CD8-positive, alpha-beta T cell (primary cell): ENCODE measurements at regions of chr15 and their contacts with region 1.

Region 1: GRCh38 chr15:65028921-65029735 is at the start of gene MTFMT:
- DNase-seq: peak; percentile 88 to 96 (median 93)
- ATAC-seq: peak; percentile 96
- H3K4me3 ChIP-seq: peak within 1 kb of the TSS; percentile 69 to 82
- H3K4me3 Mint-ChIP-seq: peak within 1 kb of the TSS; percentile 86
- H3K27ac ChIP-seq: peak within 1 kb of the TSS; percentile 53 to 61
- H3K27ac Mint-ChIP-seq: peak within 1 kb of the TSS; percentile 68
- H3K4me1 ChIP-seq: peaks cover 14% of the 10 kb centered on the region
- H3K4me1 Mint-ChIP-seq: peaks cover 24% of the 10 kb centered on the region
- H3K27me3 ChIP-seq: no peaks in the 10 kb centered on the region
- H3K27me3 Mint-ChIP-seq: peaks cover 14% of the 10 kb centered on the region
- CTCF ChIP-seq: no peak
- total RNA-seq, gene MTFMT: 6.9 to 7.4 TPM

Region 2: GRCh38 chr15:64989416-64990167 is 39.5 kb before region 1 on chr15 and contains the start of gene SPG21:
- CTCF ChIA-PET with region 1: no interaction called
- POLR2A ChIA-PET with region 1: no interaction called
- intact Hi-C with region 1: loop called (anchors 1 to 2 kb)
- DNase-seq: peak; percentile 77 to 96 (median 91)
- ATAC-seq: peak; percentile 88
- H3K4me3 ChIP-seq: peak within 1 kb of the TSS; percentile 73 to 88
- H3K4me3 Mint-ChIP-seq: peak within 1 kb of the TSS; percentile 96
- H3K27ac ChIP-seq: peak within 1 kb of the TSS; percentile 68 to 84
- H3K27ac Mint-ChIP-seq: peak within 1 kb of the TSS; percentile 94
- H3K4me1 ChIP-seq: peaks cover 12% of the 10 kb centered on the region
- H3K4me1 Mint-ChIP-seq: peaks cover 45% of the 10 kb centered on the region
- H3K27me3 ChIP-seq: no peaks in the 10 kb centered on the region
- H3K27me3 Mint-ChIP-seq: no peaks in the 10 kb centered on the region
- CTCF ChIP-seq: no peak
- total RNA-seq, gene SPG21: 25.1 to 28.2 TPM

Region 3: DNA sequence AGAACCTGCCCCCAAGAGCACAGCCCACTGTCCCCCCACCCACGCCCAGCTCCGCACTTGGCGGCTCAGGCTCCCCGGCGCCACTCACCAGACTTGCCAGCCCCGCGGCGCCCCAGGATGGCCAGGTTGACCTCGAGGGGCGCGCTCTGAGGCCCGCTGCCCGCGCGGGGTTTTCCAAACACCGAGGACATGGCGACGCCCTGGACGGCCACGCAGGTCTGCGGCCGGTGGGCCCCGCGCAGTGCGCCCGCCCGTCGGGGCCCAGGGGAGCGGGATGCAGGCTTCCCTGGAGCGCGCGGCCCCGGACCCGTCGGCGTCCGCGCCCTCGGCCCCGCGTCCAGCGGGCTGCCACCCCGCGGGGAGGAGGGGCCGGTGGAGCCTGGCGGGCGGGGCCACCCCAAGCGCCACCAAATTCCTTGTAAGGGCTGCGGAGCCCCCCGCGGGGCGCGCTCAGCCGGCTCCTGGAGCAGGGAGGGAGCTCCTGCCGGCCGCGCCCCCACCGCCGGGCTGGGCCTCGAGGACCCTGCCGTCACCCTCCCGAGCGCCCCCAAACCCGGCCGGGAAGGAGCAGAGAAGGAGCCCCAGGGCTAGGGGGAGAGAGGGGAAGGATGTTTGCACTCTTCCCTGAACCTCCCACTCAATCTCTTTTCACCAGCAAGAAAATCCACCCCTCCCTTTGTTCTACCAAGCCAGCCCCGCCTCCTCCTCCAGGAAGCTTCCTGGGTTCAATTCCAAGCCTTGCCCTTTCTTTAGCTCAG is 38.7 kb after region 1 on chr15 and contains the start of gene RASL12:
- CTCF ChIA-PET with region 1: no interaction called
- POLR2A ChIA-PET with region 1: no interaction called
- intact Hi-C with region 1: no loop called
- DNase-seq: no peak
- ATAC-seq: no peak
- H3K4me3 ChIP-seq: no peak within 1 kb of the TSS
- H3K4me3 Mint-ChIP-seq: peak within 1 kb of the TSS; percentile 58
- H3K27ac ChIP-seq: no peak within 1 kb of the TSS
- H3K27ac Mint-ChIP-seq: no peak within 1 kb of the TSS
- H3K4me1 ChIP-seq: no peaks in the 10 kb centered on the region
- H3K4me1 Mint-ChIP-seq: peaks cover 7% of the 10 kb centered on the region
- H3K27me3 ChIP-seq: peaks cover 3 to 5% of the 10 kb centered on the region in 2 experiments
- H3K27me3 Mint-ChIP-seq: peaks cover 29% of the 10 kb centered on the region
- CTCF ChIP-seq: no peak
- total RNA-seq, gene RASL12: not detected

Region 4: GRCh38 chr15:65077981-65078352 is 48.8 kb after region 1 on chr15:
- CTCF ChIA-PET with region 1: interaction called, 11 read pairs
- POLR2A ChIA-PET with region 1: no interaction called
- intact Hi-C with region 1: loop called (anchors 1 kb)
- DNase-seq: peak in 8 of 9 experiments; percentile 24 to 63 (median 48)
- ATAC-seq: peak; percentile 71
- H3K4me3 ChIP-seq: no peak overlapping the region
- H3K4me3 Mint-ChIP-seq: no peak overlapping the region
- H3K27ac ChIP-seq: no peak overlapping the region
- H3K27ac Mint-ChIP-seq: no peak overlapping the region
- H3K4me1 ChIP-seq: peaks cover 14% of the 10 kb centered on the region
- H3K4me1 Mint-ChIP-seq: peaks cover 18% of the 10 kb centered on the region
- H3K27me3 ChIP-seq: peaks cover 3% of the 10 kb centered on the region in 2 experiments
- H3K27me3 Mint-ChIP-seq: peaks cover 39% of the 10 kb centered on the region
- CTCF ChIP-seq: peak; percentile 22

Region 5: DNA sequence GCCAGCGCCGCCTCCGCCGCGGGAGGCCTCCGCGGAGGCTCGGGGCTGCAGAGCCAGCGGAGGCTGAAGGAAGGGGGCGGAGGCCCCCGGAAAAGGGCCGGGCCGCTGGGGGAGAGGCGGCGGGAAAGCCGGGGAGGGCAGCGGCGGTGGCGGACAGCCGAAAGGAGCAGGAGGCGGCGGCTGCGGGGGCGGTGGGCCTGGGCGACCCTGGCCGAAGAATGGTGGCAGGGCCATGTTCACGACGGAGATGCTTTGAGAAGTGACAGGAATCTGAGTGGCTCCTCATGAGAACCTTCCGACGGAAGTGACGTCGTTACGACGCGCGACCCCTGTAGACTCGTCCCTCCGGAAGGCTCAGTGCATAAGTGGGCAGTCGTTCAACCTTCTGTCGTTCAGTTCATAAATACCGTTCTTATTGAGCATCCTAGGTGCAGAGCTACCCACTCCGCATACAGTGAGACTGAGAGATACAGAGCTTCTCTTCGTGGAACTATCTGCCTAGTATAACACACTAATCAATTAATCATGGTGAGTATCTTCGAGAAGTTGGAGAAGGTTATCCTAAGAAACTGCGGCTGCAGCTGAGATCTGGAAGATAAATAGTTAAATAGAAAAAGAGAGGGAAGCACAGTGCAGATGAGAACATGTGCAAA is 104.5 kb after region 1 on chr15 and contains the start of gene PDCD7:
- CTCF ChIA-PET with region 1: no interaction called
- POLR2A ChIA-PET with region 1: no interaction called
- intact Hi-C with region 1: loop called (anchors 5 kb)
- DNase-seq: peak; percentile 60 to 95 (median 86)
- ATAC-seq: peak; percentile 93
- H3K4me3 ChIP-seq: peak within 1 kb of the TSS; percentile 62 to 78
- H3K4me3 Mint-ChIP-seq: peak within 1 kb of the TSS; percentile 91
- H3K27ac ChIP-seq: peak within 1 kb of the TSS; percentile 80 to 83
- H3K27ac Mint-ChIP-seq: peak within 1 kb of the TSS; percentile 96
- H3K4me1 ChIP-seq: peaks cover 26% of the 10 kb centered on the region
- H3K4me1 Mint-ChIP-seq: peaks cover 31% of the 10 kb centered on the region
- H3K27me3 ChIP-seq: no peaks in the 10 kb centered on the region
- H3K27me3 Mint-ChIP-seq: no peaks in the 10 kb centered on the region
- CTCF ChIP-seq: no peak
- total RNA-seq, gene PDCD7: 20.7 to 21.7 TPM

Region 6: GRCh38 chr15:65384895-65385858 is 356.0 kb after region 1 on chr15:
- CTCF ChIA-PET with region 1: no interaction called
- POLR2A ChIA-PET with region 1: no interaction called
- intact Hi-C with region 1: loop called (anchors 1 kb)
- DNase-seq: peak; percentile 68 to 88 (median 83)
- ATAC-seq: peak; percentile 88
- H3K4me3 ChIP-seq: peak overlapping the region; percentile 72 to 89
- H3K4me3 Mint-ChIP-seq: peak overlapping the region; percentile 90
- H3K27ac ChIP-seq: peak overlapping the region; percentile 1 to 60
- H3K27ac Mint-ChIP-seq: peak overlapping the region; percentile 18
- H3K4me1 ChIP-seq: peaks cover 7% of the 10 kb centered on the region
- H3K4me1 Mint-ChIP-seq: peaks cover 12% of the 10 kb centered on the region
- H3K27me3 ChIP-seq: no peaks in the 10 kb centered on the region
- H3K27me3 Mint-ChIP-seq: peaks cover 13% of the 10 kb centered on the region
- CTCF ChIP-seq: peak; percentile 78

Region 7: GRCh38 chr15:65451989-65452388 is 422.9 kb after region 1 on chr15:
- CTCF ChIA-PET with region 1: no interaction called
- POLR2A ChIA-PET with region 1: no interaction called
- intact Hi-C with region 1: no loop called
- DNase-seq: no peak
- ATAC-seq: no peak
- H3K4me3 ChIP-seq: no peak overlapping the region
- H3K4me3 Mint-ChIP-seq: no peak overlapping the region
- H3K27ac ChIP-seq: no peak overlapping the region
- H3K27ac Mint-ChIP-seq: no peak overlapping the region
- H3K4me1 ChIP-seq: no peaks in the 10 kb centered on the region
- H3K4me1 Mint-ChIP-seq: no peaks in the 10 kb centered on the region
- H3K27me3 ChIP-seq: no peaks in the 10 kb centered on the region
- H3K27me3 Mint-ChIP-seq: no peaks in the 10 kb centered on the region
- CTCF ChIP-seq: no peak

Region 8: GRCh38 chr15:66356345-66357236 is 1327.5 kb after region 1 on chr15 and contains the start of gene TIPIN:
- CTCF ChIA-PET with region 1: no interaction called
- POLR2A ChIA-PET with region 1: no interaction called
- intact Hi-C with region 1: no loop called
- DNase-seq: peak; percentile 92 to 98 (median 97)
- ATAC-seq: peak; percentile 97
- H3K4me3 ChIP-seq: peak within 1 kb of the TSS; percentile 69 to 76
- H3K4me3 Mint-ChIP-seq: peak within 1 kb of the TSS; percentile 99
- H3K27ac ChIP-seq: peak within 1 kb of the TSS; percentile 50 to 69
- H3K27ac Mint-ChIP-seq: peak within 1 kb of the TSS; percentile 96
- H3K4me1 ChIP-seq: peaks cover 14% of the 10 kb centered on the region
- H3K4me1 Mint-ChIP-seq: peaks cover 19% of the 10 kb centered on the region
- H3K27me3 ChIP-seq: no peaks in the 10 kb centered on the region
- H3K27me3 Mint-ChIP-seq: no peaks in the 10 kb centered on the region
- CTCF ChIP-seq: no peak
- total RNA-seq, gene TIPIN: 4.8 to 4.9 TPM